ENCODE measurements at regions of chr1 and their contacts with region 1.

Region 1: GRCh38 chr1:23634842-23635651 is 56.6 kb upstream of the RPL11 start:
- DNase-seq: peak; percentile 84
- H3K4me3 ChIP-seq: peak overlapping the region; percentile 41 to 63
- H3K27ac ChIP-seq: peak overlapping the region; percentile 64 to 93
- H3K4me1 ChIP-seq: peaks cover 3 to 31% of the 10 kb centered on the region in 2 experiments; a peak in 2 of 4 replicates
- H3K27me3 ChIP-seq: no peaks in the 10 kb centered on the region
- CTCF ChIP-seq: peak; percentile 89
- EP300 ChIP-seq: no peak
- RAD21 ChIP-seq: peak; percentile 75

Region 2: DNA sequence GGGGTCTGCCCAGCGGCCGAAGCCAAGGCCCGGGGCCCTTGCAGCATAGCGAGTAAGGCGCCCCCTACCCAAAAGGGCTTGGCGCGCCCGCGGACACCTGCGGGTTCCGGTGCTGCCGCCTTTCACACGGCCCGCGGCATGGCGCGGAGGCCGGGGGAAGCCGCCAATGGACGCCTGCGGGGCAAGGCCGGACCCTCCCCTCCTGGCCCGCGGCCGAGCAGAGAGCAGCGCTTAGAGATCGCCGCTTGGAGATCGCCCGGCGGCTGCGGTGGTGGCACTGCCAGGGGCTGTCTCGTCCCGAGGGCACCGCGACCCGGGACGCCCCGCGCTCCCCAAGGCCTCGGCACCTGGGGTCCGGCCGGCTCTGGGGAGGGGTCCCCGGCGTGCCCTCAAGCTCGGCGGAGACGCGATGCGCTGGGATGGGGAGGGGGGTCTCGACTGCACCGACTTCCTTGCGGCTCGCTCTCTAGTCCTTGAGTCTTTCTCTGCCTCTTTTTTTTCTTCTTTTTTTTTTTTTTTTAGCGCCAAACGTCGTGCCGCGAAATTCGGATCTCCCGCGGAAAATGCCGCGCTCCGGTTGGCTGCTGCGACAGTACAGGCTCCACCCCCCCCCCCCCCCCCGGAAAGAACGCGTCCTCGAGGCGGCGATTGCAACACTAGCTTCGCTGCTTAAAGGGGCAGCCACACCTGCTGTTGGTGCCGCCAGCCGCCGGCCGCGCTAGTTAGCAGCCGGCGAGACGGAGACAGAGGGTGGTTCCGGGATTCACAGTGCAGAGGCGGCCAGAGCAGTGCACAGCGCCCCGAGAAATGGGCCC is 104.1 kb before region 1 on chr1 and contains the start of gene E2F2:
- CTCF ChIA-PET with region 1: interaction called, 19 read pairs
- POLR2A ChIA-PET with region 1: no interaction called
- DNase-seq: peak; percentile 94
- H3K4me3 ChIP-seq: peak within 1 kb of the TSS; percentile 67 to 74
- H3K27ac ChIP-seq: peak within 1 kb of the TSS in 1 of 2 experiments; percentile 98; a peak in 2 of 4 replicates
- H3K4me1 ChIP-seq: peaks cover 11 to 34% of the 10 kb centered on the region in 2 experiments; a peak in 3 of 4 replicates
- H3K27me3 ChIP-seq: no peaks in the 10 kb centered on the region
- CTCF ChIP-seq: no peak
- EP300 ChIP-seq: no peak
- RAD21 ChIP-seq: no peak
- polyA plus RNA-seq, gene E2F2: 0.43 and 0.44 TPM in 2 replicates

Region 3: DNA sequence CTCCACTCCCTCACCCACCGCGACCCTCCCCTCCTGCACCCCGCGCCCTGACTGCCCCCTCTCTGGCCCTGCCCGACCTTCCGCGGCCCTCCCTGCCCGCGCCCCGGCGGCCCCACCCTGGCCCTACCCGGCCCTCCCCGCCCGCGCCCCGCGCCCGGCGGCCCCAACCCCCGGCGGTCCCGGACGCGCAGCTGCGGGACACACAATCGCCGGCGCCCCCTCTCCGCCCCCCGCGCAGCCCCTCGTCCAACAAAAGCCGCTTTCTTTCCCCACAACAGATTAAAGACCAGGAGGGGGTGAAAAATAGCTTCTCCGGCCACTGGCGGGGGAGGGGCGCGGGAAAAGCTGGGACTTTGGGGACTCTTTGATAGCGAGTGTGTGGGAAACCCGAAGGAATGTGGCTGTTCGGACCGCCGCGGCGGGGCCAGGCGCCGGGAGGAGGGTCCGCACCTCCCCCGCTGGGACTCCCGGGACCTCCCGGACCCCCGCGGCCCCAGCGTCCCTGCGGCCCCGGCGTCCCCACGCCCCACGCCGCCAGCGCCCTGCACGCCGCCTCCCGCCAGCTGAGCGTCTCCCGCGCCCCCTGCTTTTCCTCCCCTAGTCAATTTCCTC is 66.9 kb before region 1 on chr1:
- CTCF ChIA-PET with region 1: interaction called, 97 read pairs
- POLR2A ChIA-PET with region 1: no interaction called
- DNase-seq: peak; percentile 77
- H3K4me3 ChIP-seq: peak overlapping the region; percentile 49 to 51; a peak in 3 of 4 replicates
- H3K27ac ChIP-seq: peak overlapping the region; percentile 57 to 79
- H3K4me1 ChIP-seq: peaks cover 15 to 31% of the 10 kb centered on the region in 2 experiments
- H3K27me3 ChIP-seq: no peaks in the 10 kb centered on the region
- CTCF ChIP-seq: no peak
- EP300 ChIP-seq: no peak
- RAD21 ChIP-seq: no peak

Region 4: GRCh38 chr1:23598424-23598823 is 36.6 kb before region 1 on chr1:
- CTCF ChIA-PET with region 1: interaction called, 19 read pairs
- POLR2A ChIA-PET with region 1: no interaction called
- DNase-seq: peak; percentile 81
- H3K4me3 ChIP-seq: no peak overlapping the region
- H3K27ac ChIP-seq: peak overlapping the region in 1 of 2 experiments; percentile 82; a peak in 2 of 4 replicates
- H3K4me1 ChIP-seq: peaks cover 0 to 21% of the 10 kb centered on the region in 2 experiments; a peak in 2 of 4 replicates
- H3K27me3 ChIP-seq: no peaks in the 10 kb centered on the region
- CTCF ChIP-seq: no peak
- EP300 ChIP-seq: no peak
- RAD21 ChIP-seq: no peak

Region 5: DNA sequence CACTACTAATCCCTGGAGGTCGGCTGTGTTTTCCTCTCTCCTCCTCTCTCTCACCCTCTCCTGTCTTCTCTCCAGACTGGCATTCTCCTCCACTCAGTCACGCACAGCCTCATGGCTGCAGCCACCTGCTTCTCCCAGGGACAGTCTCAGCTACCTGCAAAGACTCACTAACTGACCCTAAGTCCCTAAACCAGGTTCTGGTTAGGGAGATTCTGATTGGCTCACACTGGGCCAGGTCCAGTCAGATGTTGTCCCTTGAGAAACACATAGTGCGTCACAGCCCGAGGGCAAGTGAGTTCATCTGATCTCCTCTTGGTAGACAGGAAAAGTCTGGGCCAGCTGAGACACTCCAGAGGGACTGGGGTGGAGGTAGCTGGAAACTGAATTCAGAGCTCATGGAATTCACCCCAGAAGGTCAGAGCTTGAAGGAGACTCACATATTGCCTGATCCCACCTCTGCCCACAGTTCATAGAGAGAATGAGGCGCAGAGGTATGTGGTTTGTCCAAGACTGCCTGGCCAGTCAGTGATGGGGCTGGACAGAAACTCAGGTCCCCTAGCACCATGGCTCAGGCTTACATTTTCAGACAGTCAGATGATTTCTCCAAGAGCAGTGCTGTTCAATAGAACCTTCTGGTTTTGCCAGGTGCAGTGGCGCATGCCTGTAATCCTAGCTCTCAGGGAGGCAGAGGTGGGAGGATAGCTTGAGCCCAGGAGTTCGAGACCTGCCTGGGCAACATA is 16.2 kb after region 1 on chr1:
- CTCF ChIA-PET with region 1: interaction called, 128 read pairs
- POLR2A ChIA-PET with region 1: interaction called, 4 read pairs
- DNase-seq: peak; percentile 27
- H3K4me3 ChIP-seq: no peak overlapping the region
- H3K27ac ChIP-seq: no peak overlapping the region
- H3K4me1 ChIP-seq: peaks cover 0 to 6% of the 10 kb centered on the region in 2 experiments; a peak in 1 of 4 replicates
- H3K27me3 ChIP-seq: no peaks in the 10 kb centered on the region
- CTCF ChIP-seq: no peak
- EP300 ChIP-seq: no peak
- RAD21 ChIP-seq: no peak

Region 6: DNA sequence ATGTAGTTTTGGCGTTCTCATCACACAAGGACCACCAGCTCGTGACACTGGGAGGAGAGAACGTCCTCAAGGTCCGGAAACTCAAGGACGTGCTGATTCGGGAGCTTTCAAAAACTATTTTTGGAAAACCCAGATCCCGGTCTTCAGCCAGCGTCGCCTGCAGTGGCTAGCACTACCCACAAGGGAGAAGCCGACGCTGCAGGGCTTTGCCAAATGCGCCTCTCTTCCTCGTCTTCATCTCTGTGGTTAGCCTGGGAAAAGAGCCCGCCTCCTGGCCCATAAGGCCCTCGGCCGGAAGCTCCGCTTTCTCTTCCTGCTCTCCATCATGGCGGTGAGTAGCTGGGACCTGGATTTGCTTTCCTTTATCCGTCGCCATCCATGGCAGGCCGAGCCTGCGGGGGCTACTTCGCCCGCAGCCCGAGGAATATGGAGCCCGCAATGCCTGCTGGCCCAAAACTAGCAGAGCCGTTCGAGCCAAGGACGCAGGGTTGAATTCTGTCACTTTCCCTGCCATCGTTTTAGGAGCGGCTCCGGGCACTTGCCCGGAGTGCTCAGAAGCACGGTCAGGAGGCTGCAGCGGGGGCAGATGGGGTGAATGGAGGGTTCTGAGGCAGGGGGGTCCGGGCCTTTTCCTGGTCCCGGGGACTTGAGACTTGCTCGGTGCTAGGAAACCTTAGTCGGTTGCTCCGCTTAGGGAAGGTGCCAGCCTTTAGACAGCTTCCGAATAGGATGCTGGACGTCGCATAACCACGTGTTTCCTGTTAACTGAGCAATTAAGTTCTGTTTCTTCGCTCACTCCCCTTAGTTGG is 56.7 kb after region 1 on chr1 and contains the start of gene RPL11:
- CTCF ChIA-PET with region 1: interaction called, 11 read pairs
- POLR2A ChIA-PET with region 1: interaction called, 10 read pairs
- DNase-seq: peak; percentile 94
- H3K4me3 ChIP-seq: peak within 1 kb of the TSS; percentile 96 to 98
- H3K27ac ChIP-seq: peak within 1 kb of the TSS; percentile 82 to 92
- H3K4me1 ChIP-seq: peaks cover 19 to 34% of the 10 kb centered on the region in 2 experiments; a peak in 3 of 4 replicates
- H3K27me3 ChIP-seq: no peaks in the 10 kb centered on the region
- CTCF ChIP-seq: peak; percentile 70
- EP300 ChIP-seq: peak in 1 of 2 experiments; percentile 36; a peak in 2 of 4 replicates
- RAD21 ChIP-seq: peak; percentile 35
- polyA plus RNA-seq, gene RPL11: 2,231 and 2,255 TPM in 2 replicates

Region 7: GRCh38 chr1:23824711-23825075 is 189.6 kb after region 1 on chr1:
- CTCF ChIA-PET with region 1: no interaction called
- POLR2A ChIA-PET with region 1: no interaction called
- DNase-seq: no peak
- H3K4me3 ChIP-seq: peak overlapping the region; percentile 84 to 95
- H3K27ac ChIP-seq: peak overlapping the region; percentile 82 to 85
- H3K4me1 ChIP-seq: peaks cover 2 to 8% of the 10 kb centered on the region in 2 experiments; a peak in 2 of 4 replicates
- H3K27me3 ChIP-seq: no peaks in the 10 kb centered on the region
- CTCF ChIP-seq: no peak
- EP300 ChIP-seq: no peak
- RAD21 ChIP-seq: no peak